ENCODE measurements at regions of chr3 and their contacts with region 1.

Region 1: DNA sequence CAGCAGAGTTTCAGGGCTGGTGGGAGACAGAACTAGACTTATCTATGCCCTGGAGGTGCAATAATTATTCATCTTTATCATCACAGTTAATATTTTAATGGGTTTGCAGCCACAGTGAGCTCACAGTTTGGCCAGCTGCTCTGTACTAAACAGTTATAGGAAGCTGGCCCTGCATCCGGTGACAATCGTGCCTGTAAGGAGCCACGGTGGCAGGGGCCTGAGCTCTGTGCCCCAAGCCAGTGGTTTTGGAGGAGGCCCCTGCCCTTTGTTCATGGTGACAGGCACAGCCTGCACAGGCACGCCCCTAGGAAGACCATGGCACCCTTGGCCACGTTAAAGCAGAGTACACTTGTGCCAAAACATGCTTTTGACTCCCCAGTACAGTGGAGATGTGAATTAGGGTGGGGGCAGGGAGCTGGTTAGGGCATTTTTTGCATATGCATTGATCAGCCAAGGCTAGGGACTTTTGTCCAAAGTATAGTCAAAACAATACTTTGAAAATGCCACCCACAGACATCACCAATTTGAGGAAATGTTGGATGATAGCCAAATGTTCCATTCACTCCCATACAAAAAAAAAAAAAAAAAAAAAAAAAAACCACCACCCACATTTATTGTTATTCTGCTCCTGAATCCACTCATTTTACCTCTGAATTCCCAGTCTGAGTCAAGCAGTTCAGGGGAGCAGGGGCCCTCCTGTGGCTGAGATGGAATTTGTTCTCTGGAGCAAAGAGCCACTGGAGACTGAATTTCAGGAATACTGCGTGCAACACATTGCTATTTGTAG is 3.4 kb upstream of the RFTN1 start:
- DNase-seq: no peak
- H3K4me3 Mint-ChIP-seq: peak overlapping the region; percentile 97
- H3K27ac Mint-ChIP-seq: peak overlapping the region; percentile 77
- H3K4me1 Mint-ChIP-seq: peaks cover 73% of the 10 kb centered on the region
- H3K27me3 Mint-ChIP-seq: no peaks in the 10 kb centered on the region

Region 2: GRCh38 chr3:16448639-16449070 is 68.2 kb before region 1 on chr3:
- intact Hi-C with region 1: loop called (anchors 1 kb)
- DNase-seq: no peak
- H3K4me3 Mint-ChIP-seq: no peak overlapping the region
- H3K27ac Mint-ChIP-seq: peak overlapping the region; percentile 79
- H3K4me1 Mint-ChIP-seq: peaks cover 56% of the 10 kb centered on the region
- H3K27me3 Mint-ChIP-seq: no peaks in the 10 kb centered on the region

Region 3: DNA sequence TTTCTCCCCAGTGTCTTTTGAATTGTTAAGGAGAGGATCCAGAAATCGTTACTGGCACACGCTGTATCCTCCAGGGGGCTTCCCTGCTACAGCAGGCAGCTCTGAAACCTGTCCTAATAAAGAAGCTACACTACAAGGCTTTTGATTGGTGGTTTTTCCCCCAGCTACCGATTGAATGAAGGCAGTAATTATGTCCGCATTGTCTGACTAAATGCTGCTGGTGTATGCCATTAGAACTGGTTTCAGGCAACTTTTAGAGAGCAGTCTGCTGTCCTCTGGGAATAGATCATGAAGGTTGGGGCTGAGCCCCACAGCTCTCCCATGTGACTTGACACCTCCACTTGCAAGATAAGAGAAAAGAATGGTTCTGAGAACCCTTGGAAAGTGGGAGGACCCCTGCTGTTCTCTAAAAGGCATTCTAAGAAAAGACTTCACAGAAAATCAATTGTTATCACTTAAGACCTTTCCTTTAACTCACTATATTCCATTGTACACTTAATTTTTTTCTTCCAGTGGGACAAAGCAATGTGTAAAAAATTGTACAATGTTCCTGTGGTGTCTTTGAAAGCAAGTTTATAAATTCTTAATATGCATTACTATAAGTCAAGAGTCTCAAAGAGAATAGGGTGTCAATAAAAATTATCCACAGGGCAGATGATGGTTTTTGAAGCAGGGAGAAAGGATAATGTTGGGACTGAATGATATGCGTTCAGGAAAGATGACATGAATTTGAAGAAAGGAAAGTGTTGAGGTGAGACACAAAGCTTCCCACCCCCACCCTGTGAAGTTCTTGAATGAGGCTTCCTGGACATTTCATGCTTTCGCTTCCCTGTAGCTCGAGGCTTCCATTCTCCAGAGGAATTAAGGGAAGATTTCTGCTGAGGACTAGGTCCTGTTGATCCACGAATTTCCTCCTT is 141.4 kb after region 1 on chr3:
- intact Hi-C with region 1: no loop called
- DNase-seq: no peak
- H3K4me3 Mint-ChIP-seq: no peak overlapping the region
- H3K27ac Mint-ChIP-seq: no peak overlapping the region
- H3K4me1 Mint-ChIP-seq: no peaks in the 10 kb centered on the region
- H3K27me3 Mint-ChIP-seq: peaks cover 15% of the 10 kb centered on the region

Measured in activated T-helper 1 cell treated with anti-CD3 and anti-CD28 coated beads, Interleukin-12 subunit alpha, Interleukin-12 subunit beta, Interleukin-2, Interleukin-4 antibody, amounts not matched to agents 30 ng/mL and 10 ng/mL and 1 ng/mL, durations not matched to agents 14 hours and 24 hours and 36 hours (primary cell).